HCT116 (cell line): ENCODE measurements at regions of chr11 and their contacts with region 1.

Region 1: DNA sequence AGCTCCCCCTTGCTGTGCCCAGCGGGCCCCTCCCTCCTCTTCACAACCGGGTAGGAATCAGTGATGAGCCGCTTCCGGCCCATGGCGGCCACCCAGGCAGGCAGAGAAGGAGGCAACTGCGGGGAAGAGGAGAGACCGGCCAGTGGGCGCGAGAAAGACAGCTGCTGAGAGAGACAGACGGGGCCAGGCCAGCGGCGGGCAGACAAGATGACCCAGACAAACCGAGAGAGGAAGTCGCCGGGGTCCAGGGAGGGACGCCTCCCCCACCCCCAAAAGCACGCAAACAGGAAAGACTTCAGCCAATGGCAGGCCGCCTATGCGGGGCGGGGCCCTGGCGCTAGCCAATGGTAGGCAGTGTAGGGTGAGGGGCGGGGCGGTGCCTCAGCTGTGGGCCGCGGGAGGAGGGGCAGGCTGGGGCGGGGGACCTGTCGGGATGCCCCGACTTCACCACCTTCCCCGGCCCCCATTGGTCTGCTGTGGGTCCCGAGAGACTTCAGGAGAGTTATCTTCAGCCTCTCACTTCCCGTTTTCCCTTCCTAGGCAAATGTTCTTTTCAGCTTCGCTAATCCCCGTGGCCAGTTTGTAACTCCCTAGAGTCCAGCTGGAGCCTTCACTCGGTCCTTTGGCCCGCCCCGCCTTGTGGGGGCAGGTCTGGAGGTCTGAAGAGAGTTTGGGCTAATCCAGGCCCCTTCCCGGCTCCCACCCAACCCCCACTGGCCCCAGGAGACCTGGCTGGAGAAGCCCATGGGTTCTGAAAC is at the start of gene POLD4:
- DNase-seq: no peak
- ATAC-seq: peak; percentile 72
- H3K4me3 ChIP-seq: peak within 1 kb of the TSS; percentile 79 to 86
- H3K27ac ChIP-seq: peak within 1 kb of the TSS; percentile 95
- H3K4me1 ChIP-seq: peaks cover 55 to 81% of the 10 kb centered on the region in 2 experiments
- H3K27me3 ChIP-seq: no peaks in the 10 kb centered on the region
- CTCF ChIP-seq: no peak
- POLR2A ChIP-seq: peak; percentile 47
- RAD21 ChIP-seq: no peak
- total RNA-seq, gene POLD4: 44.2 TPM

Region 2: GRCh38 chr11:67317205-67317887 is 36.1 kb before region 1 on chr11:
- CTCF ChIA-PET with region 1: interaction called, 10 read pairs
- POLR2A ChIA-PET with region 1: interaction called, 3 read pairs
- RAD21 ChIA-PET with region 1: no interaction called
- intact Hi-C with region 1: no loop called
- DNase-seq: peak; percentile 90
- ATAC-seq: peak; percentile 88
- H3K4me3 ChIP-seq: peak overlapping the region; percentile 81 to 90
- H3K27ac ChIP-seq: peak overlapping the region; percentile 87
- H3K4me1 ChIP-seq: peaks cover 11 to 28% of the 10 kb centered on the region in 2 experiments; a peak in 3 of 4 replicates
- H3K27me3 ChIP-seq: no peaks in the 10 kb centered on the region
- CTCF ChIP-seq: peak; percentile 85 to 97 (median 87)
- POLR2A ChIP-seq: peak; percentile 55
- RAD21 ChIP-seq: peak; percentile 99

Region 3: DNA sequence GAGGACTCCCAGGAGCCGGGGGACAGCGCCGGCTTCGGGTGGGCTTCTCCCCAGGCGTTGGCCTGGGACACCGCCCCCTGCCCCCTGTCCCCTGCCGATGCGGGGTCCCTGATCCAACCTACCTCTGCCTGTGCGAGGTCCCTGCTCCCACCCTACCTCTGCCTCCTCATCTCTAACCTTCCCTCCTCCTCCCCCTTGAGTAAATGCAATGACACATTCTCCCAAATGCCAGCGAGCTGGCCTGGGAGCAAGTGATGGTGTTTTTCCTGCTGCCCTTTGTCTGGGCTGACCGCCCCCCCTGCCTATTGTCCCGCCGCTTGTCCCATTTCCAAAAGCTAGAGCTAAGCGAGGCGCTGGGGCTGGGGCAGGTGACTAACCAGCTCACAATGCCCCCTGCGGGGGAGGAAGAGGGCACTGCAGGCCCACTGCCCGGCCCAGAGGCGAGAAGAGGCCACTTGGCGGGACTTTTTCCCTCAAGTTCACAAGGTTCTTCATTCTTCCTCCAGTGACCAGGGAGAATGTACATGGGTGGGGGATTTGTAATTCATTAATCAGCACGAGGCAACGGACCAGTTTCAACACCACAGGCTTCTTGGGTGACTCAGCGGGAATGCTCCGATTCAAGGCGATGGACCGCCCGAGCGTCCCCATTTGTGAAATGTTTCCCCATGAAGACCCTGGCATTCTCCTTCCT is 20.6 kb after region 1 on chr11:
- CTCF ChIA-PET with region 1: interaction called, 456 read pairs
- POLR2A ChIA-PET with region 1: interaction called, 210 read pairs
- RAD21 ChIA-PET with region 1: interaction called, 44 to 76 read pairs
- intact Hi-C with region 1: loop called (anchors 1 kb)
- DNase-seq: peak; percentile 93
- ATAC-seq: peak; percentile 69
- H3K4me3 ChIP-seq: peak overlapping the region; percentile 64 to 83
- H3K27ac ChIP-seq: peak overlapping the region; percentile 100
- H3K4me1 ChIP-seq: peaks cover 59 to 84% of the 10 kb centered on the region in 2 experiments
- H3K27me3 ChIP-seq: no peaks in the 10 kb centered on the region
- CTCF ChIP-seq: peak in 2 of 3 experiments; percentile 32 to 41; a peak in 3 of 6 replicates
- POLR2A ChIP-seq: peak; percentile 3
- RAD21 ChIP-seq: no peak

Region 4: GRCh38 chr11:67382276-67383136 is 29.0 kb after region 1 on chr11:
- CTCF ChIA-PET with region 1: interaction called, 456 read pairs
- POLR2A ChIA-PET with region 1: interaction called, 210 read pairs
- RAD21 ChIA-PET with region 1: interaction called, 44 to 76 read pairs
- intact Hi-C with region 1: loop called (anchors 1 kb)
- DNase-seq: peak; percentile 69
- ATAC-seq: peak; percentile 74
- H3K4me3 ChIP-seq: no peak overlapping the region
- H3K27ac ChIP-seq: no peak overlapping the region
- H3K4me1 ChIP-seq: peaks cover 54 to 64% of the 10 kb centered on the region in 2 experiments
- H3K27me3 ChIP-seq: no peaks in the 10 kb centered on the region
- CTCF ChIP-seq: peak in 2 of 3 experiments; percentile 98; a peak in 4 of 6 replicates
- POLR2A ChIP-seq: no peak
- RAD21 ChIP-seq: no peak

Region 5: GRCh38 chr11:67401495-67402191 is 48.1 kb after region 1 on chr11 and contains the start of gene PPP1CA:
- CTCF ChIA-PET with region 1: interaction called, 9 read pairs
- POLR2A ChIA-PET with region 1: interaction called, 5 read pairs
- RAD21 ChIA-PET with region 1: interaction called in 1 of 2 experiments, 6 read pairs
- intact Hi-C with region 1: loop called (anchors 1 kb)
- DNase-seq: peak; percentile 53
- ATAC-seq: peak; percentile 90
- H3K4me3 ChIP-seq: peak within 1 kb of the TSS; percentile 82 to 90
- H3K27ac ChIP-seq: peak within 1 kb of the TSS; percentile 99
- H3K4me1 ChIP-seq: peaks cover 9 to 18% of the 10 kb centered on the region in 2 experiments
- H3K27me3 ChIP-seq: no peaks in the 10 kb centered on the region
- CTCF ChIP-seq: peak in 1 of 3 experiments; percentile 33; a peak in 3 of 6 replicates
- POLR2A ChIP-seq: peak; percentile 24
- RAD21 ChIP-seq: peak; percentile 48
- total RNA-seq, gene PPP1CA: 238 TPM

Region 6: GRCh38 chr11:67468835-67469811 is 115.6 kb after region 1 on chr11 and contains the start of gene TMEM134:
- CTCF ChIA-PET with region 1: no interaction called
- POLR2A ChIA-PET with region 1: interaction called, 3 read pairs
- RAD21 ChIA-PET with region 1: no interaction called
- intact Hi-C with region 1: loop called (anchors 5 kb)
- DNase-seq: peak; percentile 82
- ATAC-seq: peak; percentile 71
- H3K4me3 ChIP-seq: peak within 1 kb of the TSS; percentile 82 to 95
- H3K27ac ChIP-seq: peak within 1 kb of the TSS; percentile 88
- H3K4me1 ChIP-seq: peaks cover 24 to 43% of the 10 kb centered on the region in 2 experiments
- H3K27me3 ChIP-seq: no peaks in the 10 kb centered on the region
- CTCF ChIP-seq: peak in 2 of 3 experiments; percentile 26 to 28; a peak in 2 of 6 replicates
- POLR2A ChIP-seq: peak; percentile 88
- RAD21 ChIP-seq: no peak
- total RNA-seq, gene TMEM134: 44.2 TPM

Region 7: GRCh38 chr11:67507864-67508485 is 154.5 kb after region 1 on chr11 and contains the start of gene CDK2AP2:
- CTCF ChIA-PET with region 1: no interaction called
- POLR2A ChIA-PET with region 1: no interaction called
- RAD21 ChIA-PET with region 1: interaction called in 1 of 2 experiments, 3 read pairs
- intact Hi-C with region 1: loop called (anchors 2 kb)
- DNase-seq: peak; percentile 99
- ATAC-seq: peak; percentile 79
- H3K4me3 ChIP-seq: peak within 1 kb of the TSS; percentile 72 to 85
- H3K27ac ChIP-seq: peak within 1 kb of the TSS; percentile 93
- H3K4me1 ChIP-seq: peaks cover 31 to 43% of the 10 kb centered on the region in 2 experiments
- H3K27me3 ChIP-seq: no peaks in the 10 kb centered on the region
- CTCF ChIP-seq: no peak
- POLR2A ChIP-seq: peak; percentile 26
- RAD21 ChIP-seq: no peak
- total RNA-seq, gene CDK2AP2: 53.6 TPM